Activated naive CD4-positive, alpha-beta T cell treated with anti-CD3 and anti-CD28 coated beads for 36 hours (primary cell): ENCODE measurements at regions of chr7 and their contacts with region 1.

Region 1: DNA sequence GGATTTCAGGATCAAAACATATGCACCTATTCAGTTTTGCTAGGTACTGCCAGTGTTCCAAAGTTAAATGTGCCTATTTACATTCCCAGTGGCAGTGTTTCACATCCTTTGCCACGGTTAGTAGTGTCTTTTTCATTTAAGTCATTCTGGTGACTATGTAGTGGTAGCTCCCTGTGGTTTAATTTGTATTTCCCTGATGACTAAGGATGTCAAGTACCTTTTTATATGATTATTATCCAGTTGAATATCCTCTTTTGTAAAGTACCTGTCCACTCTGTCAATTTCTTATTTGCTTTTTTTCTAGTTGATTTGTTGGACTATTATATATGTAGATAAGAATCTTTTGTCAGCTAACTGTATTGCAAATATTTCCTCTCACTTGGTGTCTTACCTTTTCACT is 45.1 kb downstream of the TMEM60 start:
- DNase-seq: no peak
- H3K4me3 Mint-ChIP-seq: no peak overlapping the region
- H3K27ac Mint-ChIP-seq: no peak overlapping the region
- H3K4me1 Mint-ChIP-seq: peaks cover 44% of the 10 kb centered on the region
- H3K27me3 Mint-ChIP-seq: no peaks in the 10 kb centered on the region

Region 2: DNA sequence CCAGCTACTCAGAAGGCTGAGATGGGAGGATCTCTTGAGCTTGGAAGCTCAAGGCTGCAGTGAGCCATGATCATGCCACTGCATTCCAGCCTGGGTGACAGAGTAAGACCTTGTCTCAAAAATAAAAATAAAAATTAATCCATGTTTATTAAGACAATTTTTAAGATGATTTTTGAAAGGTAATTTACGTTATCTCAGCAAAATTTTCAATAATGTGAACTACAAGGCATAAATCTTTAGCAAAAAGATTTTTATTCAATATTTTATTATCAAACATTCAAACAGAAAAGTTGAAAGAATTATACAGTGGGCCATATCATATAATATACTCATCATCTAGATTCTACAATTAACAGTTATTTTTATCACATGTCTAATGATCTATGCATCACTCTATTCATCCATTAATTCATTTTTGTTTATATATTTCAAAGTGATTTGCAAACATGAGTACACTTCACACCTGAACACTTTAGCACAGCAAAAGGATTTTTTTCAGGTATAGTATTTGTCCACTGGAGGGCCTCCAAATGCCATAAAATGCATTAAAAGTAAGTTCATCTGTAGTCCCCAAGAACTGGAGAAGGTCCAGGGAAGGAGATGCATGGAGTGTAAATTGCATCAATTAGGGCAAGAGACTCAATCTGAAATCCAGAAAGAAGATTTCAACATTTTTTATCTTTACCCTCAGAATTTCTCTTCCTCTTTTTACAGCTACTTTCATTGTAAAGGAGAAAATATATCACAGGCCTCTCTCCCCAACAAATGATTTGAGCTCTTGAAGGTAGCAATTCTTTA is 95.5 kb before region 1 on chr7:
- CTCF ChIA-PET with region 1: interaction called, 44 read pairs
- intact Hi-C with region 1: no loop called
- DNase-seq: peak; percentile 18
- H3K4me3 Mint-ChIP-seq: no peak overlapping the region
- H3K27ac Mint-ChIP-seq: no peak overlapping the region
- H3K4me1 Mint-ChIP-seq: no peaks in the 10 kb centered on the region
- H3K27me3 Mint-ChIP-seq: no peaks in the 10 kb centered on the region

Region 3: DNA sequence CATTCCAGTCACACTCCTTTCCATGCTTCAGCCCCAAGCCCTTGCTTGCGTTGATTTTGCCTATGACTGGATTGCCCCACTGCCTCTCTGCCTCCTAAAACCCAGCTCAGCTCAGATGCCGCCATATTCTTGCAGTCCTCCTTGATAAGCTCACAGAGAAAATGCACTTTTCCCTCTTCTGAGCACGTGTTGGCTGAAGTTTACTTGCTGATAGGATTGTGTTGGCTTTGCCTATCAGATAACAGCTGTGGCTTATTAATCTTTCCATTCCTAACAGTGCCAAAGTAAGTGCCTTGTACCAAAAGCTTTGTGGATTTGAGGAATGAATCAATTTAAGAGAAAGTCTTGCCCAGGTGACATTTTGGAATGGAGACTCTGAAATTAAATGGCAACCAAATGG is 294.6 kb after region 1 on chr7:
- CTCF ChIA-PET with region 1: no interaction called
- intact Hi-C with region 1: no loop called
- DNase-seq: no peak
- H3K4me3 Mint-ChIP-seq: no peak overlapping the region
- H3K27ac Mint-ChIP-seq: no peak overlapping the region
- H3K4me1 Mint-ChIP-seq: no peaks in the 10 kb centered on the region
- H3K27me3 Mint-ChIP-seq: peaks cover 4% of the 10 kb centered on the region